Ascending aorta (tissue), 2 donors: ENCODE measurements at regions of chr2 and their contacts with region 1.

Region 1: GRCh38 chr2:173075781-173076580 is at the start of gene MAP3K20:
- DNase-seq: peak; percentile 42 to 89
- H3K4me3 ChIP-seq: peak within 1 kb of the TSS; percentile 75 to 92
- H3K27ac ChIP-seq: peak within 1 kb of the TSS; percentile 96 to 100
- H3K4me1 ChIP-seq: peaks cover 3 to 23% of the 10 kb centered on the region in 2 donors
- H3K27me3 ChIP-seq: no peaks in the 10 kb centered on the region
- CTCF ChIP-seq: peak; percentile 16 to 49 (median 30)
- total RNA-seq, gene MAP3K20: 21.3 TPM

Region 2: DNA sequence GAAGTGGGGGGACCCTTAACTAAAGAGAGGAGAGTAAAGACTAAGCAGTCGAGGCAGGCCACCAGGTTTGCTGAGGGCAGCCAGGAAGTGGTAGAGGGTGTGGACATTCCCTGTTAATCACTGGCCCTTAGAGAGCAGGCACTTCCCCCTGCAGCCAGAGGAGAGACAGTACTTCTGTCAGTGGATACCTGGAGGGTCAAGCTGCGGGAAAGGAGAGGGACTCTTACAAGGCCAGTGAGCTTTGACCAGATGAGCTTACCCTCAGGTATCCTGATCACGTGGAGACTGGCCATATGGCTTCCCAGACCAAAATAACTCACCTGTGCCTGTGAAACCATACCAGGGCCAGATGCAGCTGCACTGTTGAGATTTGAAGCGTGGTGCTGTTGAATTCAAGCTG is 620.0 kb before region 1 on chr2:
- intact Hi-C with region 1: no loop called
- DNase-seq: no peak
- H3K4me3 ChIP-seq: no peak overlapping the region
- H3K27ac ChIP-seq: no peak overlapping the region
- H3K4me1 ChIP-seq: no peaks in the 10 kb centered on the region
- H3K27me3 ChIP-seq: no peaks in the 10 kb centered on the region
- CTCF ChIP-seq: no peak

Region 3: DNA sequence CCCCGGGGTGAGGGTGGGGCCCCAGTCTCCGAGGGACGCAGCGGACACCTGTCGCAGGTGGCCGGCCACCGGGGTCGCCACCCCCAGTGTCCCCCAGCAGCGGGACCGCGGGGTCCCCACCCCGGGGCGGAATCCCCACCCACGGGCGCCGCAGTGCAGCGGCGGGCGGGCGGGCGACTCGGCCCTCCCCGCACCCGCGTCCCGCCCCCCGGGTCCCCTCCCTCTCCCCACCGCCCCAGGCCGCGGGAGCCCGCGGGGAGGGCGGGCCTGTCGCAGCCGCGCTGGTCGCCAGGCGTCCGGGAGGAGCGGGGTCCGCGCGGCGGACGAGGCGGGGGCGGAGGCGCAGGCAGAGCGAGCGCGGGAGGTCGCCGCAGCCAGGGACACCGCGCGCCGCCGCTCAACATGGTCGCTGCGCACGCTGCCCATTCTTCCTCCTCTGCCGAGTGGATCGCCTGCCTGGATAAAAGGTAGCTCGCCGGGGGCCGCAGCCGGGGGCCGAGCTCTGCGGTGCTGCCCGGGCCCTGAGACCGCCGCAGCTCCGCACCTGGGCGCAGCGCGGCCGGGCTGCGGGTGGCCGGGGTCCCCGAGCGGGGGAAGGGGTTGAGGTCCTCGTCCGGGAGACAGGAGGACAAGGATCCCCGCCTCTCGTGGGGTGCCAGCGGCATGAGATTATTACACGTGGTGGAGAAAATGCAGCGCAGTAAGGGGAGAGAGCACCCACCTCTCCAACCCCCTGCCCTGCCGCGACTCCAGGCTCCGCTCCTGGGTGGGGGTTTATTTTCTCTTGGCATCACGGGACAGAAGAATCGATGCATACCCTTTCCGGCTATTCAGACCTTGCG is 340.2 kb before region 1 on chr2 and contains the start of gene RAPGEF4:
- intact Hi-C with region 1: no loop called
- DNase-seq: no peak
- H3K4me3 ChIP-seq: peak within 1 kb of the TSS; percentile 54 to 68
- H3K27ac ChIP-seq: no peak within 1 kb of the TSS
- H3K4me1 ChIP-seq: peaks cover 0 to 3% of the 10 kb centered on the region in 2 donors
- H3K27me3 ChIP-seq: no peaks in the 10 kb centered on the region
- CTCF ChIP-seq: no peak
- total RNA-seq, gene RAPGEF4: 79.9 TPM

Region 4: GRCh38 chr2:173027181-173028128 is 48.5 kb before region 1 on chr2:
- intact Hi-C with region 1: loop called (anchors 1 kb)
- DNase-seq: peak; percentile 53 to 95
- H3K4me3 ChIP-seq: no peak overlapping the region
- H3K27ac ChIP-seq: peak overlapping the region; percentile 65 to 70
- H3K4me1 ChIP-seq: peaks cover 0 to 8% of the 10 kb centered on the region in 2 donors
- H3K27me3 ChIP-seq: no peaks in the 10 kb centered on the region
- CTCF ChIP-seq: peak; percentile 90 to 94 (median 93)

Region 5: GRCh38 chr2:173048897-173049661 is 26.9 kb before region 1 on chr2:
- intact Hi-C with region 1: loop called (anchors 1 kb)
- DNase-seq: peak; percentile 65 to 85
- H3K4me3 ChIP-seq: no peak overlapping the region
- H3K27ac ChIP-seq: peak overlapping the region; percentile 16 to 59
- H3K4me1 ChIP-seq: peaks cover 0 to 6% of the 10 kb centered on the region in 2 donors
- H3K27me3 ChIP-seq: no peaks in the 10 kb centered on the region
- CTCF ChIP-seq: no peak

Region 6: DNA sequence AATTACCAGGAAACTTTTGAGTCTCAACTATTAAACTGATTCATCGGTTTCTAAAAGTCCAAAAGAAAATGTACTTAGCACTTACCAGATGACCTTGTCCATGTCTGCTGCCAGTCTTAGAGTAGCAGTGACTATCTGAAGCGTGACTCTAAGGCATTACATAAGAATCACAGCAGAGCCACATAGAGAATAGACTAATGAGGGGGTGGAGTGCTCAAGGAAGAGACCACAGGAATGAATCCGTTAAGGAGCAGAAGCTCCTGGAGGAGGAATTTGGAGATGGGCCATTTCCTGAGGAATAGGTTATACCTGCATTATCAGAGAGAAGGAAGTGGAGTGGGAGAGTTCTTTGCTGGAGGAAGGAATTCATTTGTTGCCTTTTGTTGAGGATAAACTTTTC is 115.6 kb after region 1 on chr2:
- intact Hi-C with region 1: loop called (anchors 5 kb)
- DNase-seq: no peak
- H3K4me3 ChIP-seq: no peak overlapping the region
- H3K27ac ChIP-seq: peak overlapping the region; percentile 27 to 45
- H3K4me1 ChIP-seq: peaks cover 10 to 61% of the 10 kb centered on the region in 2 donors
- H3K27me3 ChIP-seq: no peaks in the 10 kb centered on the region
- CTCF ChIP-seq: no peak